Body of pancreas (tissue), 4 donors: ENCODE measurements at regions of chr2 and their contacts with region 1.

Region 1: DNA sequence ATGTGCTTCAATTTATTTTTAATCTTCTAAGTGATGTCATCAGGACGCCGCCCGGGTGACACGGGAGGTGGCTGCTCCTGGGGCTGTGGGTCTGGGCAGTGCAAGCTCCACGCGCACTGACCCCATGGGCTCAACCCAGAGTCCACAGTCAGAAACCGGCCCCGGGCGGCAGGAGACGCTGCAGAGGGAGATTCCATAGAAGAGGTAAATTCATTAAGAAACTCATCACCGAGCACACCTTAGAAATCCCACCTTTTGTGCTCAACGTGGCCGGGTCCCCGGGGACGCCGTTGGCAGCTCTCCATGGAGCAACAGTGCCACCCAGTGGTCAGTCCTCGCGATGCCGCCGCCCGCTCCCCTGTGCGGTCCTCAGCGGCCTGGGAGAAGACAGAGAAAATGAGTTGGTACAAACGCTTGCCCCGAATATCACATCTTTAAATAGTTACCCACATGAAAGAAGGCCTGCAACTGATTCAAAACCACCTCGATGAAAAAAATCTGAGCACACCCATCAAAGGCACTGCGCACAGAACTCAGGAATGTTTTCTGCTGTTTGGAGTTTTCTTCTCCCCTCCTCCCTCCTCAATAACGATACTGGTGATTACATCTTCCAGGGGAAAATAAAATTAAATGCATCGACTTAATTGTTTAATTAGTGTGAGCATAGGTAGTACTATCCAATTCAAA is 92.6 kb downstream of the CMPK2 start:
- DNase-seq: peak; percentile 40 to 65 (median 56)
- ATAC-seq: peak; percentile 84
- H3K4me3 ChIP-seq: no peak overlapping the region
- H3K27ac ChIP-seq: no peak overlapping the region
- H3K4me1 ChIP-seq: peaks cover 7% of the 10 kb centered on the region
- H3K27me3 ChIP-seq: no peaks in the 10 kb centered on the region
- CTCF ChIP-seq: peak; percentile 87 to 96 (median 90)
- POLR2A ChIP-seq: no peak

Region 2: GRCh38 chr2:5666798-5667197 is 1106.4 kb before region 1 on chr2:
- intact Hi-C with region 1: no loop called
- DNase-seq: no peak
- ATAC-seq: no peak
- H3K4me3 ChIP-seq: no peak overlapping the region
- H3K27ac ChIP-seq: no peak overlapping the region
- H3K4me1 ChIP-seq: no peaks in the 10 kb centered on the region
- H3K27me3 ChIP-seq: peaks cover 0 to under 1% of the 10 kb centered on the region in 2 donors
- CTCF ChIP-seq: no peak
- POLR2A ChIP-seq: no peak

Region 3: GRCh38 chr2:6352906-6353515 is 420.1 kb before region 1 on chr2:
- intact Hi-C with region 1: loop called (anchors 10 kb)
- DNase-seq: peak; percentile 61 to 73 (median 72)
- ATAC-seq: peak; percentile 82
- H3K4me3 ChIP-seq: no peak overlapping the region
- H3K27ac ChIP-seq: no peak overlapping the region
- H3K4me1 ChIP-seq: no peaks in the 10 kb centered on the region
- H3K27me3 ChIP-seq: no peaks in the 10 kb centered on the region
- CTCF ChIP-seq: peak; percentile 34 to 85 (median 76)
- POLR2A ChIP-seq: no peak